ENCODE measurements at regions of chr7 and their contacts with region 1.

Region 1: DNA sequence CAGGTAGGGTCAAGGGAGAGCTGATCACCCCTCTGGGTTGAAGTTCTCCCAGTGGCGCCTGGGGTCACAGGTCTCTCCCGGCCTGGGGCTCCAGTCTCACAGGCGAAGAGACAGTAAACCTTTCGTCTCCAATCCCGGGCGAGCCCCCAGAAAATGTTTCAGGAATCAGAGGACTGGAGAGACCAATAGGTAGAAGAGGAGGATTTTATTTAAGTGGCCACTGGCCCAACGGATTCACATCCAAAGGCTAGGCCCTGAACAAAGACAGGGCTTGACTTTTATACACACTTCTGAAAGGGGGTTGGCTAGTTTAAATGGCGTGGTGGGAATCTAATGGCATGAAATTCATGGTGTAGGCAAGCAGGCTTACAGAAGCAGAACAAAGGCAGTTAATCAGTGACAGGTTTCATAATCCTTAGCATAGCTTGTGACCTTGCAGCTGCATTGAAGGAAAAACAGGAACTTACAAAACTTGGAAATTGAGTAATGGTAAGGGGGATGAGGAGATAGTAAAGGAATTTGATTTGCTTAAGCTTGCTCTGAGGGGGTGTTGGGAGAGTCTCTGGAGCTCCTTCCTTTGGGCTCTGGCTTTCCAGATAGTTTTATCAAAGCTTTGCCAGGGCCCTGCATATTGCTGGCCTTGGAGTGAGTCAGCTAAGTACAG is 105.5 kb downstream of the TRIM24 start:
- DNase-seq: no peak
- H3K4me3 Mint-ChIP-seq: peak overlapping the region; percentile 70
- H3K27ac Mint-ChIP-seq: peak overlapping the region; percentile 95
- H3K4me1 Mint-ChIP-seq: peaks cover 26% of the 10 kb centered on the region
- H3K27me3 Mint-ChIP-seq: no peaks in the 10 kb centered on the region
- CTCF ChIP-seq: no peak

Region 2: GRCh38 chr7:138170959-138171703 is 394.5 kb before region 1 on chr7:
- CTCF ChIA-PET with region 1: no interaction called
- intact Hi-C with region 1: no loop called
- DNase-seq: no peak
- H3K4me3 Mint-ChIP-seq: no peak overlapping the region
- H3K27ac Mint-ChIP-seq: no peak overlapping the region
- H3K4me1 Mint-ChIP-seq: no peaks in the 10 kb centered on the region
- H3K27me3 Mint-ChIP-seq: no peaks in the 10 kb centered on the region
- CTCF ChIP-seq: no peak

Region 3: GRCh38 chr7:138603549-138604318 is 38.2 kb after region 1 on chr7:
- CTCF ChIA-PET with region 1: no interaction called
- intact Hi-C with region 1: no loop called
- DNase-seq: no peak
- H3K4me3 Mint-ChIP-seq: no peak overlapping the region
- H3K27ac Mint-ChIP-seq: no peak overlapping the region
- H3K4me1 Mint-ChIP-seq: peaks cover 19% of the 10 kb centered on the region
- H3K27me3 Mint-ChIP-seq: no peaks in the 10 kb centered on the region
- CTCF ChIP-seq: no peak

Region 4: DNA sequence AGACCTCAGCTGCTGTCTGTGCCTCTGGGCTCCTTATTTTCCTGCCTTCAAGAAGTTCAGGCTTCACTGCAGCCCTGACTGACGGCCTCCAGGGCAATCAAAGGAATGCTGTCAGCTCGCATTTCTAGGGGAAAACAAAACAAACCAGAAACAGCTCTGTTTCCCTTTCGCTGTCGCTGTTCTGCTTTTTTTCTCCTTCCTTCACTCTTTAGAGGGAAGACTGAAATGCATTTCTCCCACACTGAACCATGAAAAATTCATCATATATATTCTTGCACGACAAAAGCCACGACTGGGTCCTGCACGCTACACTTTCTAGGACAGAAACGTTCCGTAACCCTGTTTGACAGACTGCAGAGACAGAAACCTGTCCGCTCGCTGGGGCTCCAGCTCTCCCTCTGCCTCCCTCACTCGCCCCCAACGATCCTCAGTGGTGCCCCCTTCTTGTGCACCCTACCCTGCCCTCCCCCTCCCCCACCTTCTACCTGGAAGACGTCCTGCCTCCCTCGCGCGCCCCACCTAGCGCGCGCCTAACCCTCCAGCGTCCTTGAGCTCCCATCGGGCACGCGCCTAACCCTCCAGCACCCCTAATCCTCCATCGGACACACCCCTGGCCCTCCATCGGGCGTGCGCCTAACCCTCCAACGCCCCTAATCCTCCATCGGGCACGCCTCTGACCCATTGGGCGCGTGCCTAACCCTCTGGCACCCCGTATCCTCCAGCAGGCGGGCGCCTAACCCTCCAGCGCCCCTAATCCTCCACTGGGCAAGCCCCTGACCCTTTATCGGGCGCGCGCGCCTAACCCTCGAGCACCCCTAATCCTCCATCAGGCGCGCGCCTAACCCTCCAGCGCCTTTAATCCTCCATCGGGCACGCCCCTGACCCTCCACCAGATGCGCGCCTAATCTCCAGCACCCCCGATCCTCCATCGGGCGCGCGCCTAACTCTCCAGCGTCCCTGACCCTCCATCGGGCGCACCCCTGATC is 98.4 kb after region 1 on chr7:
- CTCF ChIA-PET with region 1: no interaction called
- intact Hi-C with region 1: loop called (anchors 10 kb)
- DNase-seq: peak; percentile 38
- H3K4me3 Mint-ChIP-seq: peak overlapping the region; percentile 86
- H3K27ac Mint-ChIP-seq: peak overlapping the region; percentile 58
- H3K4me1 Mint-ChIP-seq: peaks cover 17% of the 10 kb centered on the region
- H3K27me3 Mint-ChIP-seq: no peaks in the 10 kb centered on the region
- CTCF ChIP-seq: no peak